Activated naive CD4-positive, alpha-beta T cell treated with anti-CD3 and anti-CD28 coated beads for 36 hours (primary cell): ENCODE measurements at regions of chr4 and their contacts with region 1.

Region 1: GRCh38 chr4:38743866-38744265 is 38.9 kb downstream of the TLR10 start:
- DNase-seq: no peak
- H3K4me3 Mint-ChIP-seq: no peak overlapping the region
- H3K27ac Mint-ChIP-seq: no peak overlapping the region
- H3K4me1 Mint-ChIP-seq: peaks cover 8% of the 10 kb centered on the region
- H3K27me3 Mint-ChIP-seq: peaks cover 4% of the 10 kb centered on the region

Region 2: DNA sequence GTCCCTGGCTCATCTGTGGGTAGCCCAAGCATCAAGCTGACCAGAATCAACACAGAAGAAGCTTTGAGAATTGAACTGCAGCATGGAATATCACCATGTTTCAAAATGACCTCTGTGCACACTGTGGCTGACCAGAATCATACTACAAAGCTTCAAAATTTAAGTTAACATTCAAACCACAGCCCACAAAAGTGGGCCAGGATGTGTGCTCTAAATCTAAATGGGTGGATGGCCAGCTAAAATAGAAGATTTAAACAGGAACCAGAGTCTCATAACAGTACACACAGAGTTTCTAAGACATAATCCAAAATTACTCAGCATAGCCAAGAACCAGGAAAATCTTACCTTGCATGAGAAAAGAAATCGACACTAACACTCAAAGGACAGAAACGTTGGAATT is 33.8 kb before region 1 on chr4:
- CTCF ChIA-PET with region 1: no interaction called
- intact Hi-C with region 1: loop called (anchors 1 kb)
- DNase-seq: no peak
- H3K4me3 Mint-ChIP-seq: no peak overlapping the region
- H3K27ac Mint-ChIP-seq: no peak overlapping the region
- H3K4me1 Mint-ChIP-seq: peaks cover 4% of the 10 kb centered on the region
- H3K27me3 Mint-ChIP-seq: no peaks in the 10 kb centered on the region

Region 3: DNA sequence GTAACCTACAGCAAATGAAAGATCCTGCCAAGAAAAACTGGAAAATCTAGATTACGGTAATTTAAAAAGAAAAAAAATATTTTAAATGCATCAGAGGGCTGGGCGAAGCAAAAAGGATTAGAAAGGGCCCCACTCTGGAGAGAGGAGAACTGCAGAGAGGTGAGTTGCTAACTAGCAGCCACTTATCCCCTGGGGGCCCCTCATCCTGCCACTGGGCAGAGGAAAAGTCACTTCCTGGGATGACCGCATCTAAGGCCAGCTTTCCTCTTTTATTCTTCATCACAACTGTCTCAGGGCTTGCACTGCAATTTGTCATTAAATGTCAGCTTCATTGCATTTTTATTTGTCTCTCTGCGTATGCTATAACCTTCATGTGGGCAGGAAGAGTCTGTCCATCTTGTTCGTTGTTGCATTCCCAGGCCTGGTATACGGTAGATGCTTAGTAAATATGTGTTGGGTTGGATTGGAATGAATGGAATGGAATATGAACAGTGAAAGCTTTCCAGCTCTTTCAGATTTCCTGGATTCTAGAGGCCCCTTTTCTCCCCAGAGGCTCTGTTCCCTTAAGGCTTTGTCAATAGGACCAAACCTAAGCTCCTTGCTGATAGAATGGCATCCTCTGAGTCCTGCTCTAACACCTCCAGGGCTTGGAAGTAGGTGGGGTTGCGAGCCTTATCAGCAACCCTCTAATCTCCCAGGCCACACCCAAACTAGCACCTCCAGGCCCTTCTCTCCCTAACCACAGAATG is 20.0 kb before region 1 on chr4:
- CTCF ChIA-PET with region 1: no interaction called
- intact Hi-C with region 1: no loop called
- DNase-seq: no peak
- H3K4me3 Mint-ChIP-seq: no peak overlapping the region
- H3K27ac Mint-ChIP-seq: no peak overlapping the region
- H3K4me1 Mint-ChIP-seq: peaks cover 14% of the 10 kb centered on the region
- H3K27me3 Mint-ChIP-seq: no peaks in the 10 kb centered on the region

Region 4: DNA sequence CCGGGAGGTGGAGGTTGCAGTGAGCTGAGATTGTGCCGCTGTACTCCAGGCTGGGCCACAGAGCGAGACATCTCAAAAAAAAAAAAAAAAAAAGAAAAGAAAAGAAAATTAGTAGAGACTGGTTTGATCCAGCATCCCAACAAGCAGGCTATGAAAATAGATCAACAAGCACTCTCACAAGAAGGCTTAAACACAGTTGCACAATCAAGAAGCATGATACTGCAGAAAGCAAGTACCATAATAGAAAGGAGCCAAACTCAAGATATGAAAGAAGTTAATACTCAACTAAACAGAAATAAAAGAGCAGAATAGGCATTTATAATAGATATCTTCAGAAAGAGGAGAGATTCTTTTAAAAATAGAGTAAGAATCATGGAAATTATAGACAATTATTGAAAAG is 102.1 kb after region 1 on chr4:
- CTCF ChIA-PET with region 1: no interaction called
- intact Hi-C with region 1: no loop called
- DNase-seq: no peak
- H3K4me3 Mint-ChIP-seq: no peak overlapping the region
- H3K27ac Mint-ChIP-seq: no peak overlapping the region
- H3K4me1 Mint-ChIP-seq: no peaks in the 10 kb centered on the region
- H3K27me3 Mint-ChIP-seq: no peaks in the 10 kb centered on the region